Activated CD4-positive, alpha-beta memory T cell treated with anti-CD3 and anti-CD28 coated beads, Interleukin-2, amount 10 ng/mL, durations not matched to agents 7 days and 5 days (primary cell): ENCODE measurements at regions of chr22 and their contacts with region 1.

Region 1: DNA sequence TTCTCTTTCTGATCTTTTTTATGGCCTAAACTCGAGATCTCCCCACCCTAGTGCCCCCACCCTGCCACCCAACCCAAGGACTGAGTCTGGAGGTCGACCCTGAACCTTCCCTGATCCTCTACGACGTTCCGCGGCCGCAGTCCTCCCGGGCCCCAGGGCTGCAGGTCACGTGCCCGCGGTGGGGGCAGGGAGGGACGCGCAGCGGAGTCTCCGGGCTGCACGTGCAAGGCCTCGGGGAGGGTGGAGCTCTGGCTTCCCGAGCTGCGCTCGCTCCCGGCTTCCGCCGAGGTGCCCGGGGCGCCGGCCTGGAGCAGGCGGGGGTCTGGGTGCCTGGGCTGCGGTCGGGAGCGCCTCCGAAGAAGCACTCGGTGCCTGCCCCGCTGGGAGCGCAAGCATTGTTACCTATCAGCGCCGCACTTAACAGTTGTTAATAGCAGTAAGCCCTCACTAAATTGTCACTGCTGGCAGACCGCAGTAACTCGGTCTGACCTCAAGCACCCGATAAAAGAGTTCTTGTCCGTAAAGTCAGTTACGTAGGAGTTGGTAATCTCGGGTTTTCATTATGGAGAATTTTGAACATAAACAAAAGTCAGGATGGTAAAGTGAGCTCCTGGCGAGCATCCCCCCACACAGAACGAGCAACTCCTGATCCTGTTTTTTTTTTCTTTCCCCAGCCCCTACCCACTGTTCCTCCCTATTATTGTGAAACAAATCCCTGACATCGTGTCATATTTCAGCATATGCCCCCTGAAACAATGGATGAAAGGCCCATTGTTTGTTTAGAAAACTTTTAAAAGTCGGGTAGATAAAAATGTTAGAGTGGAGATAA is 69.7 kb upstream of the EP300 start:
- DNase-seq: peak; percentile 86
- H3K4me3 Mint-ChIP-seq: peak overlapping the region; percentile 75
- H3K27ac Mint-ChIP-seq: peak overlapping the region; percentile 69
- H3K4me1 Mint-ChIP-seq: peaks cover 22% of the 10 kb centered on the region
- H3K27me3 Mint-ChIP-seq: peaks cover 9% of the 10 kb centered on the region

Region 2: GRCh38 chr22:41001722-41002122 is 21.0 kb before region 1 on chr22:
- CTCF ChIA-PET with region 1: no interaction called
- POLR2A ChIA-PET with region 1: interaction called, 11 read pairs
- DNase-seq: no peak
- H3K4me3 Mint-ChIP-seq: no peak overlapping the region
- H3K27ac Mint-ChIP-seq: no peak overlapping the region
- H3K4me1 Mint-ChIP-seq: no peaks in the 10 kb centered on the region
- H3K27me3 Mint-ChIP-seq: peaks cover 8% of the 10 kb centered on the region

Region 3: DNA sequence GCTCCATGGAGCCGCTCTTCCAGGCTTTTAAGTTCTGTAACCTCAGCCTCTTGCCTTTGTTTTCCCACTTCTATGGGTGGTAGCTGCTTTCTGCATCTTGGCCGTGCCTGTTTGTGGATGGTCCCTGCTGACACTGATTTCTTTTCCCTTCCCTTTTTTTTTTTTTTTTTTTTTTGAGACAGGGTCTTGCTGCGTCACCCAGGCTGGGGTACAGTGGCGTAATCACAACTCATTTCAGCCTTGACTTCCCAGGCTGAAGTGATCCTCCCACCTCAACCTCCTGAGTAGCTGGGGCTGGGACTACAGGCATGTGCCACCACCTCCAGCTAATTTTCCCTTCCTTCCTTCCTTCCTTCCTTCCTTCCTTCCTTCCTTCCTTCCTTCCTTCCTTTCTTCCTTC is 12.0 kb after region 1 on chr22:
- CTCF ChIA-PET with region 1: no interaction called
- POLR2A ChIA-PET with region 1: interaction called, 15 read pairs
- DNase-seq: no peak
- H3K4me3 Mint-ChIP-seq: no peak overlapping the region
- H3K27ac Mint-ChIP-seq: no peak overlapping the region
- H3K4me1 Mint-ChIP-seq: no peaks in the 10 kb centered on the region
- H3K27me3 Mint-ChIP-seq: peaks cover 3% of the 10 kb centered on the region

Region 4: GRCh38 chr22:41070665-41071331 is 48.1 kb after region 1 on chr22:
- CTCF ChIA-PET with region 1: no interaction called
- POLR2A ChIA-PET with region 1: interaction called, 21 read pairs
- DNase-seq: no peak
- H3K4me3 Mint-ChIP-seq: no peak overlapping the region
- H3K27ac Mint-ChIP-seq: no peak overlapping the region
- H3K4me1 Mint-ChIP-seq: peaks cover 10% of the 10 kb centered on the region
- H3K27me3 Mint-ChIP-seq: no peaks in the 10 kb centered on the region

Region 5: GRCh38 chr22:41132550-41132949 is 109.9 kb after region 1 on chr22:
- CTCF ChIA-PET with region 1: no interaction called
- POLR2A ChIA-PET with region 1: no interaction called
- DNase-seq: no peak
- H3K4me3 Mint-ChIP-seq: no peak overlapping the region
- H3K27ac Mint-ChIP-seq: no peak overlapping the region
- H3K4me1 Mint-ChIP-seq: peaks cover 2% of the 10 kb centered on the region
- H3K27me3 Mint-ChIP-seq: no peaks in the 10 kb centered on the region